Activated CD8-positive, alpha-beta T cell treated with anti-CD3 and anti-CD28 coated beads for 36 hours (primary cell): ENCODE measurements at regions of chr12 and their contacts with region 1.

Region 1: DNA sequence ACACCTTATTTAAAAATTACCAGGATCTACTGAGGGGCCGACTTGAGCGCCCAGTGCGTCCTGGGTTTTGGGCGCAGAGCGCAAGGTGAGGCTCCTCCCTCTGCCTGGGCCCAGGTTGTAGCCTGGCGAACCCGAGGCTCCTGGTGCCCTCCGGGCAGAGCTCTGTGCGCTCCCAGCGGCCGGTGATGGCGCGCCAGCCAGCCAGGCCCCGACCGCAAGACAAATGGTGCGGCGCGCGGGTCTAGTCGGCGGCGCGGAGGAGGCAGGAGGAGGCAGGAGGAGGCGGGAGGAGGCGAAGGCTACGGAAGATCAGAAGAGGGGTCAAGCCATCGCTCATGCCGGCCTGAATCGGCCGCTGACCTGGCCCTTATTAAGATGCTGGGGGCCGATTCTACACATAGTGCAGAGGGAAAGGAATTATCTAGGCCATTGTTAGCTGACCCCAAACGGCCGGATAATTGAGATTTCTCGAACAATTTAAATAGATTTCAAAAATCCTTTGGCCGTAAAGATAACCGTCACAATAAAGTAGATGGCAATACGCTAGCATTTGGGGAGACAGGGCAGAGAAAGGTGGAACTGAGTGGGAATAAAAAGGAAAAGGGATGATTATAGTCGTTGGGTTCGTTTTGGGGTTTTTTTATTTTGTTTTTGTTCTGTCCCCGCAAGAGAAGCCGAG is 2.8 kb downstream of the TBX5 start:
- DNase-seq: no peak
- ATAC-seq: no peak
- H3K4me3 Mint-ChIP-seq: no peak overlapping the region
- H3K27ac Mint-ChIP-seq: no peak overlapping the region
- H3K4me1 Mint-ChIP-seq: peaks cover 3% of the 10 kb centered on the region
- H3K27me3 Mint-ChIP-seq: peaks cover 89% of the 10 kb centered on the region
- CTCF ChIP-seq: no peak

Region 2: DNA sequence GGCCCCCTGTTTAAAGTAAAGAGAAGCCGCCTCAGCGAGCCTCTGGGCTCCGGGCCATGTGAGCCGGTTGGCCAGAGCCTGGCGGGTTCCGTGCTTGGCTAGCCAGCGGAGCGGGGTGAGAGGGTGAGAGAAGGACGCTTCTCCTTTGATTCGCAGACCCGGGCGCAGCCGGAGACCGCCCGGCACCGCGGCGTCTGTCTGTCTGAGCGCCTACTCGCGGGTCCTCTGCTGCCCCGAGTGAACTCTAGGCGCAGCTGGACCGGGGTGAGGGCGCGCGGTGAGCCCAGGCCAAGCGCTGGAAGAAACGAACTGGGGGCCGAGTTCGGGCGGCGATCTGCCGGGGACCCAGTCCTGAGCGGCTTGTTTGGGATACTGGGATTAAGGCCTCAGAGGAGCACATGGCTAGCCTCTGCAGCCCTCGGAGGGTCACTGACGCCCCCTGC is 44.1 kb after region 1 on chr12:
- CTCF ChIA-PET with region 1: no interaction called
- POLR2A ChIA-PET with region 1: no interaction called
- intact Hi-C with region 1: loop called (anchors 2 kb)
- DNase-seq: no peak
- ATAC-seq: no peak
- H3K4me3 Mint-ChIP-seq: no peak overlapping the region
- H3K27ac Mint-ChIP-seq: no peak overlapping the region
- H3K4me1 Mint-ChIP-seq: no peaks in the 10 kb centered on the region
- H3K27me3 Mint-ChIP-seq: peaks cover 79% of the 10 kb centered on the region
- CTCF ChIP-seq: no peak

Region 3: DNA sequence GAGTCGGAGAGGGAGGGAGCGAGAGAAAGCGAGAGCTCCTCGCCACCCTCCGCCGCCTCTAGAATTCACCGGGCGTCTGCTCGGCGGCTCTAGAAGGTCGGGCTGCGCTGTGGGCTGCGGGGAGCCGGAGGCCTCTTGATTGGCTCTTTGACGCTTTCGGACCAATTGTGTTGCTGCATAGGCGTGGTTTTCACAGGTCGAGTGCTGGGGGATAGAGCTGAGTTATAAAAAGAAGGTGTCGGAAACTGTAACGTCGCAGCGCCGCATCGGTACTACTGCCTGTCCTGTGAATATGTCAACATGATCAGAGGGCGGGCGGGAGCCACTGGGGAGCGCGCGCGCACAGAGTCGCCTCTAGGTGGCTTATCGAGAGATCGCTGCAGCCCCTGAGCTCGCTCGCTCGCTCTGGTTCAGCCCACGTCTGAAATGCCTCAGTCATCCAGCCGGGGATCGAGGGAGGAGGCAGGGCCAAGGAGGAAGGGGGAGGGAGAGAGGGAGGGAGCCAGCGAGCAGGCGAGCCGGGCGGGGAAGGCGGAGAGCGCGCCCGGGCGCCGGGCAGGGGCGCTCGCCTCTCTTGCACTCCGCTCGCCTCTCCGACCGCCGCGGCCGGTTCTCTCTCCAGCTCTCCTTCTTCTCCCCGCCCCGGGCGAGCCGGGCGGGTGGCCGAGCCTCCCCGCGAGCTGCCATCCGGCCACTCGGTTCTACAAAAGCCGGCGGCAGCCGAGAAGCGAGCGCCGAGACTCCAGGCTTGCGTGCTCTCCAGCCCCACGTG is 281.1 kb after region 1 on chr12 and contains the start of gene TBX3:
- CTCF ChIA-PET with region 1: no interaction called
- POLR2A ChIA-PET with region 1: no interaction called
- intact Hi-C with region 1: loop called (anchors 10 kb)
- DNase-seq: peak; percentile 82
- ATAC-seq: peak; percentile 88
- H3K4me3 Mint-ChIP-seq: peak within 1 kb of the TSS; percentile 67
- H3K27ac Mint-ChIP-seq: no peak within 1 kb of the TSS
- H3K4me1 Mint-ChIP-seq: peaks cover 21% of the 10 kb centered on the region
- H3K27me3 Mint-ChIP-seq: peaks cover 94% of the 10 kb centered on the region
- CTCF ChIP-seq: no peak
- total RNA-seq, gene TBX3: not detected